Activated CD8-positive, alpha-beta T cell treated with anti-CD3 and anti-CD28 coated beads, Interleukin-2, amount 10 ng/mL, durations not matched to agents 7 days and 5 days (primary cell): ENCODE measurements at regions of chr4 and their contacts with region 1.

Region 1: GRCh38 chr4:5998333-5998936 is 19.8 kb downstream of the C4orf50 start:
- DNase-seq: peak; percentile 65
- ATAC-seq: peak; percentile 71
- H3K4me3 Mint-ChIP-seq: no peak overlapping the region
- H3K27ac Mint-ChIP-seq: no peak overlapping the region
- H3K4me1 Mint-ChIP-seq: peaks cover 7% of the 10 kb centered on the region
- H3K27me3 Mint-ChIP-seq: no peaks in the 10 kb centered on the region

Region 2: GRCh38 chr4:5988086-5988845 is 10.2 kb before region 1 on chr4:
- CTCF ChIA-PET with region 1: interaction called, 13 read pairs
- POLR2A ChIA-PET with region 1: no interaction called
- DNase-seq: no peak
- ATAC-seq: no peak
- H3K4me3 Mint-ChIP-seq: no peak overlapping the region
- H3K27ac Mint-ChIP-seq: no peak overlapping the region
- H3K4me1 Mint-ChIP-seq: no peaks in the 10 kb centered on the region
- H3K27me3 Mint-ChIP-seq: no peaks in the 10 kb centered on the region

Region 3: DNA sequence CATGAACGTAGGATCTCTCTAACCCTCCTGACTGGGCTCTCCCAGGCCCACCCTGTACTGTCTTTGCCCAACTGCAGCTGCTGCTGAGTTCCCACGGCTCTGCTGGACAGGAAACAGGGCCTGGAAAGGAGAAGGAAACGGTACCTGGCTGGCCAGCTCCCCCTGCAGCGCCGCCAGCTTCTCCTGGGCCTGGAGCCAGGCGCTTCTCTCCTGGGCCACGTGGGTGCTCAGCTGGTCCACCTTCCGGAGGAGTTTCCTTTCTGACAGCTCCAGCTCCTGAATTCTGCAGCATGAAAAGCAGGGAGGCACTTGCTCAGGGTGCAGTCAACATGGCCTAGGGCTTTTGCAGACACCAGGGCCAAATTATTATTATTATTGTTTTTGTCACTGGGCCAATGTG is 13.3 kb after region 1 on chr4:
- CTCF ChIA-PET with region 1: interaction called, 27 read pairs
- POLR2A ChIA-PET with region 1: no interaction called
- DNase-seq: no peak
- ATAC-seq: no peak
- H3K4me3 Mint-ChIP-seq: no peak overlapping the region
- H3K27ac Mint-ChIP-seq: no peak overlapping the region
- H3K4me1 Mint-ChIP-seq: peaks cover 4% of the 10 kb centered on the region
- H3K27me3 Mint-ChIP-seq: peaks cover 21% of the 10 kb centered on the region